Common myeloid progenitor, CD34-positive (primary cell): ENCODE measurements at regions of chr2 and their contacts with region 1.

Region 1: GRCh38 chr2:106542811-106543259 is 55.7 kb downstream of the CD8B2 start:
- DNase-seq: peak; percentile 69 to 79 (median 75)
- H3K4me3 ChIP-seq: peak overlapping the region in 5 of 7 experiments; percentile 49 to 72 (median 65)
- H3K27ac ChIP-seq: no peak overlapping the region
- H3K4me1 ChIP-seq: peaks cover 11 to 31% (median 18%) of the 10 kb centered on the region in 4 experiments
- H3K27me3 ChIP-seq: no peaks in the 10 kb centered on the region

Region 2: DNA sequence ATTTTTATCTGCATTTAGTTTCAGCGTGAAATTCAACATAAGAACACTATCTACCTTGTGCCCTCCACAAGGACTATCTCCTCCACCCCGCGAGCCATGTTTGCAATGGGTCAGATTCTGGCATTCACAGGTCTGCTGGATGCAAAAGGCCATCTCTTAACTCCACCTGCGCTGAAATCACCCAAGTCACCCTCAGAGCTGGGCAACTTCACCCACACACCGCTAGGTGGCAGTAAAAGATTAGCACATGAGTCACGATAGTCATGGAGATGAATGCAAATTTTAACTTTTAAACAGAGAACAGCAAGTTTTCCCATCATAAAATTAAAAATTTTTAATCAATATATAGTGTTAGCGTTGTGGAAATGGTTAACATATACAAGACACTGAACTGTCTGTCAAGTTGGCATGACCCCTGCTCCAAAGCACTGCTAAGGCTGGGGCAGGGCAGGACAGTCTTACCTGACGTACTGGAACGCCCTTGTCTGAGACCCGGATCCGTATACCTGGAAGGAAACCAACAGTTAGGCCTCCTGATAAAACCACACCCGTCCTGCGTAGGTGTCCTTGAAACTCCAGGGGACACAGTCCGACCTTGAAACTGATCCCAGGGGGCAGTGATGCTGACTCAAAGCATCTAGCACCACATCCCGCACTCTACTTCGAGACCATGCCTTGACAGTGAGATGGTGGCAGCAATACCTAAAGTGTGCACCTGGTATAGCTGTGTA is 438.3 kb before region 1 on chr2:
- CTCF ChIA-PET with region 1: interaction called, 12 read pairs
- POLR2A ChIA-PET with region 1: no interaction called
- DNase-seq: peak; percentile 60 to 79 (median 75)
- H3K4me3 ChIP-seq: no peak overlapping the region
- H3K27ac ChIP-seq: no peak overlapping the region
- H3K4me1 ChIP-seq: no peaks in the 10 kb centered on the region
- H3K27me3 ChIP-seq: no peaks in the 10 kb centered on the region

Region 3: GRCh38 chr2:106296182-106296815 is 246.5 kb before region 1 on chr2:
- CTCF ChIA-PET with region 1: no interaction called
- POLR2A ChIA-PET with region 1: no interaction called
- DNase-seq: no peak
- H3K4me3 ChIP-seq: no peak overlapping the region
- H3K27ac ChIP-seq: no peak overlapping the region
- H3K4me1 ChIP-seq: no peaks in the 10 kb centered on the region
- H3K27me3 ChIP-seq: peaks cover 0 to 2% (median 0%) of the 10 kb centered on the region in 5 experiments

Region 4: DNA sequence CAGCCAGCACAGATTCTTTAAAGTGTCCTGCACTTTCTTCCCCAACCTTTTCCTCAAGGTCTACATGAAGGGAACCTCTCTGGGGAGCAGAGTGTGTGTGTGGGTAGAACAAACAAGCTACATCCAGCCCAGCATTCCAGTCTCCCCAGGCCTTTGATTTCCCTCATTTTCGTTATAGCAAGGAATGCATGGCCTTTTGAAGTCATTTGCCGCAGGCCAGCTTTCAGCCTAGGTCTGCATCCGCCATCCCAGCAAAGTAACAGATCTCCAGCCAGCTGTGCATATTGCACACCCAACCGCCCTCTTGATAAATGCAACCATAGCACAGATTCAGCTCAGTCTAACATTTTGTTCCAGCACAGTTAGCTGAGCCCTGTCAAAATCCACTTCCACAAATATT is 11.1 kb before region 1 on chr2:
- CTCF ChIA-PET with region 1: interaction called, 25 read pairs
- POLR2A ChIA-PET with region 1: no interaction called
- DNase-seq: no peak
- H3K4me3 ChIP-seq: no peak overlapping the region
- H3K27ac ChIP-seq: no peak overlapping the region
- H3K4me1 ChIP-seq: peaks cover 0 to 2% (median 0%) of the 10 kb centered on the region in 4 experiments
- H3K27me3 ChIP-seq: no peaks in the 10 kb centered on the region

Region 5: GRCh38 chr2:106562268-106563186 is 19.7 kb after region 1 on chr2:
- CTCF ChIA-PET with region 1: interaction called, 17 read pairs
- POLR2A ChIA-PET with region 1: interaction called, 4 read pairs
- DNase-seq: peak in 1 of 3 donors; percentile 32
- H3K4me3 ChIP-seq: no peak overlapping the region
- H3K27ac ChIP-seq: no peak overlapping the region
- H3K4me1 ChIP-seq: peaks cover 8 to 43% (median 15%) of the 10 kb centered on the region in 4 experiments
- H3K27me3 ChIP-seq: no peaks in the 10 kb centered on the region

Region 6: GRCh38 chr2:106572541-106573450 is 30.0 kb after region 1 on chr2:
- CTCF ChIA-PET with region 1: interaction called, 16 read pairs
- POLR2A ChIA-PET with region 1: no interaction called
- DNase-seq: peak; percentile 40 to 76 (median 74)
- H3K4me3 ChIP-seq: no peak overlapping the region
- H3K27ac ChIP-seq: no peak overlapping the region
- H3K4me1 ChIP-seq: peaks cover 0 to 2% (median 0%) of the 10 kb centered on the region in 4 experiments
- H3K27me3 ChIP-seq: no peaks in the 10 kb centered on the region

Region 7: DNA sequence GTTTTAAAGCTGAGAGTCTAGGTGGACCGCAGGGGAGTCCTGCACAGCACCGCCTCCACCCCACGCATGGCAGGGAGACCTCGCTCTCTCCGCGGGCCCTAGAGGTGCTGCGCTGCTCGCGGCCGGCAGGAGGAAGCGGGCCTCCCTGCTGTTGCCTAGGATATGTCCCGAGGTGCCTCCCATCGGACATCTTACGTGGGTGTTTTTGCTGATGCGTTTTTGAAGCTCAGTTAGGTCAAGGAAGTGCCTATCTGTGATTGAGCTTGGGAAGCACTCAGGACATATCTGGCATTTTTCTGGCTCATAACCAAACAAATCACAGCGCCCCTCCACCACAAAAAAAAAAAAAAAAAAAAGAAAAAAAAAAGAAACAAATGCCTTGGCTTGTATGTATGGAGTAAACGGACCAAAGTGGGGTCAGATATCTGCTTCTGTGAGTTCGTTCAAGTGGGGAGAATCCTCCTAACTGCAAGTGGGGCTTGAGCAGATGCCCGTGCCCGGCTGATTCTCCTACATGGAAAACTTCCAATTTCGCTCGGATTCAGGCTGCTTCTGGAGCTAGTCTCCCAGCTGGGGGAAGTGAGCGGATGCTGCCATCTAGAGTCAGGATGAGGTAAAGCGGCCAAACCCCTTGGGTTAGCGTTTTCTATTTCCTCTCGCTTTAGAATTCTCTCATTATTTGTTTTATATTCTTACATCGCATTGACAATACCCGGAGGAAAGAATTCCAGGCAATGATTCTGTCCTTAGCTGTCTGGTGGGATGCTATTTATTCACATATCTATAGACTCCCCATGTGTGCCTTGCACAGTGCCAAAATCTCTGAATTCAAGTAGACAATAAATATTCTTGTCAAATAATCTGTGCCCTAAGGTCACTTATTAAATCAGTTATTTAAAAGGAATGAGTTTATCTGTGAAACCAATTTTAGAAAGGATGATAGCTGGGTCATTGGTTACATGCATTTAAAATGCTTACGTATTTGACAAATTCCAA is 39.6 kb after region 1 on chr2:
- CTCF ChIA-PET with region 1: interaction called, 62 read pairs
- POLR2A ChIA-PET with region 1: no interaction called
- DNase-seq: peak; percentile 64 to 77 (median 75)
- H3K4me3 ChIP-seq: peak overlapping the region in 6 of 7 experiments; percentile 35 to 77 (median 54)
- H3K27ac ChIP-seq: no peak overlapping the region
- H3K4me1 ChIP-seq: peaks cover 2 to 22% (median 15%) of the 10 kb centered on the region in 4 experiments
- H3K27me3 ChIP-seq: peaks cover 0 to 17% (median 12%) of the 10 kb centered on the region in 5 experiments

Region 8: DNA sequence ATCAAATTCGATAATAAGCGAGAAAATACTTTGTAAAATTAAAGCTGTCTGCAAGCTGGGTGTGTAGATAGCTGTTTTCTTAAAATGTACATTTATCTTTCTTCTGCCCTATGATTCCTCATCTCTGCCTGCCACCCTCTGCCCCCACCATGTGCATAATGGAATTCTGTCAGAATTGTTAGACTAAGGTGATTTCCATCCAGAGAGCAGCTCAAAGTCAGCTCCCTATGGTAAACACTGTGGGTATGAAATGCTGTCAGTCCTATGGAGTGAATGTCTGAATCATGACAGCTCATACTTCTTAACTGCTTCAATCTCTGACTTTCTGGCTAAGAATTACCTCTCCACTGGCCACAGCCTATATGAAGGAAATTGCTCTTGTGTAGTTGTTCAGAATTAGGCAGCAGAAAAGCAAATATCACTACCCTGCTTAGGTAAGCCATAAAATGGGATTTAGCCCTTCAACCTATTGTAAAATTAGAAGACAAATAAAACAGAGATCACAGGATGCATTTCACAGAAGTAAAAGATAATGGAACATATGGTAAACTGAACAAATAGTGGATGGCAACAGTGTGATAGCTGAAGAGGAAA is 82.0 kb after region 1 on chr2:
- CTCF ChIA-PET with region 1: no interaction called
- POLR2A ChIA-PET with region 1: no interaction called
- DNase-seq: no peak
- H3K4me3 ChIP-seq: no peak overlapping the region
- H3K27ac ChIP-seq: no peak overlapping the region
- H3K4me1 ChIP-seq: no peaks in the 10 kb centered on the region
- H3K27me3 ChIP-seq: no peaks in the 10 kb centered on the region

Region 9: DNA sequence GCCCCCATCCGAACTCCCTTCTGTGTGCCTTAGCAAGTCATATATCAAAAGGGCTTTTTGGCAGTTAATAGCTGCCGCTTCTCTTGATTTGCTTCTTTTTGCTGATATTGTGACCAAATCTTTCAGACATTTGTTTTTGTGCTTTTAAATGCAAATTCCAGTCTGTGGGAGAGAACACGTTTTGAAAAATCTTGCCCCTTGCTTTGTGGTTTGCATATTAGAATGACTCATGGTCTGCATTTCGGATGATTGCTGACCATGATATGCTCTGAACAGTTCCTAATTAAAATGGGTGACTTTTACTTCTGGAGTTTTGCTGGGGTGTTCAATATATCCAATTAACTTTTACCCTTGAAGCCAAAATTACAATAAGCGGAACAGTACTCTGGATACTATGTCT is 401.4 kb after region 1 on chr2:
- CTCF ChIA-PET with region 1: no interaction called
- POLR2A ChIA-PET with region 1: no interaction called
- DNase-seq: no peak
- H3K4me3 ChIP-seq: no peak overlapping the region
- H3K27ac ChIP-seq: no peak overlapping the region
- H3K4me1 ChIP-seq: no peaks in the 10 kb centered on the region
- H3K27me3 ChIP-seq: no peaks in the 10 kb centered on the region